A549 (cell line): ENCODE measurements at regions of chr2 and their contacts with region 1.

Region 1: DNA sequence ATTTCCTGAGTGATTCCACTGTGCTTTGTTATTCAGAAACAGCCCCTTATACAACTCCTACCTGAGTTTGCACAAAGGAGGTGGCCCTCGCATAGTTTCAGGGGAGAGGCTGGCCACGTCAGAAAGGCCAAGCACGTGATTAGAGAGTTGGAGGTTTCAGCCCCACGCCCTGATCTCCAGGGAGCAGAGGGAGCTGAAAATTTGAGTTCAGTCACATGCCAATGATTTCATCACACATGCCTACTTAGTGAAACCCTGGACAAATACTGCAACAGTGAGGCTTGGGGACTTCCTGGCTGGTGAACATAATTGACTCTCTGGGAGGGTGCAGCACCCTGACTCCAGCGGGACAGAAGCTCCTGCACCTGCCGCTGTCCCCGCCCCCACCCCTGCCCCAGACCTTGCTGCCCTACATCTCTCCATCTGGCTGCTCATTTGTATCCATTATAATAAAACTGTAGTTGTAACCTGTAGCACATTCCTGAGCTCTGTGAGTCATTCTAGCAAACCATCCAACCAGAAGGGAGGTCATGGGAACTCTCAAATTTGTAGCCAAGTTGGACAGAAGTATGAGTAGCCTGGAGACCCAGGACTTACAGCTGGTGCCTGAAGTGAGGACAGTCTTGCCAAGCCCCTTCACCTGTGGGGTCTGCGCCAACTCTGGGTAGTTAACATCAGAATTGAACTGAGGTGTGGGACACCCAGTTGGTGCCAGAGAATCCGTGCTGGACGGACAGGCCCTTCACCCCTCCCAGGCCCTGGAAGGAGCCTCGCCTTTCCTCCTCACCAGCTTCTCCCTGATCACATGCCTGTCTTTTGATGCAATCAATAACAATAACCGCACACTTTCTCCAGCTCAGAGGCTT is 224.3 kb downstream of the ANAPC1 start:
- DNase-seq: peak; percentile 60 to 79
- ATAC-seq: peak; percentile 81 to 94
- H3K4me3 ChIP-seq: no peak overlapping the region
- H3K27ac ChIP-seq: peak overlapping the region; percentile 79 to 90
- H3K4me1 ChIP-seq: peaks cover 34% of the 10 kb centered on the region
- CTCF ChIP-seq: no peak
- EP300 ChIP-seq: peak in 1 of 2 experiments; percentile 61; a peak in 1 of 5 replicates
- POLR2A ChIP-seq: no peak
- RAD21 ChIP-seq: no peak; a peak in 1 of 5 replicates

Region 2: DNA sequence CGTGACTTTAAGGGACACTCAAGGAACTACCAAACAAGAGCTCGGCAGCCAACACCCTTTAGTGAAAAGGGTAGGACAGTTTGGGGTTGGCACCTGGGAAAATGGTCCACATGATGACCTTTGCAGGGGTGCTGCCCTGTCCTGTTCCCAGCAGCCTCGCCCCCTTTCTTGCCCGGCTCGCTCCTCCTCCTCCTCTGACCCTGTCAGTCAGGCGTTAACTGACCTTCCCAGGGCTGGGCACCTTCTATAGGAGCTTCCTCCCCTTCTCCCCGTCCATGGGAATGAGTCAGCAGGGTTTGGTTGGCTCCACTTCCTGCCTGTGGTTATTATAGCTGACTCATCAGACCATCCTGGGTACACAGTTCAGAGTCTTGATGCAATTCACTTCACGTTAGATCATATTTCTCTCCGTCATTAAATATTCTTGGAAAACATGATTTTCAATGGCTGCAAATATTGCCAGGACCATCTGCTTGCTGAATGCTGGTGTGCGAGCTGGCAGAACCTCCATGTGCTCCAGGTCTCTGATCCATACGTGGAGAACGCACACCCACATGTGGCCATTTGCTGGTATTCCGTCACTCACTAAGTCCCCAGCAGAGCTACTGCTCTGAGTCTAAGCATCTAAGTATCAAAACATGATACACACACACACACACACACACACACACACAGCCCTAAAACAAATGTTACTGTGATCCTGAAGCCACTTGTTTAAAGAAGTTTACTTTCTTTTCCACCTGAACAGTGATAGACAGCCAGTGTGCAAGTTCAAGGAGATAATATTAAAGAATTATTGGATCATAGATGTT is 39.3 kb after region 1 on chr2:
- CTCF ChIA-PET with region 1: interaction called, 6 read pairs
- POLR2A ChIA-PET with region 1: interaction called, 10 read pairs
- DNase-seq: peak; percentile 95 to 97
- ATAC-seq: peak; percentile 97 to 98
- H3K4me3 ChIP-seq: peak overlapping the region; percentile 17; the same call in 1 of the 3 replicates
- H3K27ac ChIP-seq: peak overlapping the region; percentile 88 to 91
- H3K4me1 ChIP-seq: peaks cover 37% of the 10 kb centered on the region
- CTCF ChIP-seq: peak; percentile 76
- EP300 ChIP-seq: peak; percentile 73 to 82; a peak in 3 of 5 replicates
- POLR2A ChIP-seq: no peak
- RAD21 ChIP-seq: peak; percentile 92 to 95